OCI-LY7 (cell line): ENCODE measurements at regions of chr16 and their contacts with region 1.

Region 1: GRCh38 chr16:27235055-27235937 is 32.0 kb downstream of the KDM8 start:
- DNase-seq: peak; percentile 78
- H3K4me3 ChIP-seq: no peak overlapping the region
- H3K27ac ChIP-seq: no peak overlapping the region
- H3K4me1 ChIP-seq: peaks cover 67% of the 10 kb centered on the region
- CTCF ChIP-seq: peak; percentile 99

Region 2: DNA sequence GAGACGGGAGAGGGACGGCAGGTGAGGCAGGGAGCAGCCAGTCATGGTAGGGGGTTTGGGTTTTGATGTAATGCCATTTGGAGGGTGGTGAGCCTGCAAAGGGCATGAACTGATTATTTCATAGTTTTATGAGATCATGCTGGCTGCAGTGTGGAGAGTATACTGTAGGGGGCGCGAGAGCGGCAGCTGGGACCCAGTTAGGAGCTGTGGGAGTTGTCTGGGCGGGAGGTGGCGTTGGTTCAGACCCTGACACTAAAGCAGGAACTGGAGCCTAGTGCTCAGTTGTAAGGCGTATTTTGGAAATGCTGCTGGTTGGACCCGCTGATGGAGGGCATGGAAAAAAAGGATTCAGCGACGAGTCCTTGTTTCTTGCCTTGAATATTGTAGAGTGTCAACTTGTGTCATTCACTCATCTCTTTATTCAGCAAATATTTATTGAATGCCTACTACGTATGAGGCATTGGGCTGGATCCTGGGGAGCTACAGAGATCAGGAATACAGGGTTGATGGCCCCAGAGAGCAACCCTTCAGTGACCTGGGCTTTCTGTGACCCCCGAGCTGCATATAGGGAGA is 55.7 kb before region 1 on chr16:
- CTCF ChIA-PET with region 1: interaction called, 4 read pairs
- POLR2A ChIA-PET with region 1: interaction called, 3 read pairs
- intact Hi-C with region 1: loop called (anchors 1 kb)
- DNase-seq: peak; percentile 87
- H3K4me3 ChIP-seq: no peak overlapping the region
- H3K27ac ChIP-seq: no peak overlapping the region
- H3K4me1 ChIP-seq: peaks cover 33% of the 10 kb centered on the region
- CTCF ChIP-seq: peak; percentile 99

Region 3: DNA sequence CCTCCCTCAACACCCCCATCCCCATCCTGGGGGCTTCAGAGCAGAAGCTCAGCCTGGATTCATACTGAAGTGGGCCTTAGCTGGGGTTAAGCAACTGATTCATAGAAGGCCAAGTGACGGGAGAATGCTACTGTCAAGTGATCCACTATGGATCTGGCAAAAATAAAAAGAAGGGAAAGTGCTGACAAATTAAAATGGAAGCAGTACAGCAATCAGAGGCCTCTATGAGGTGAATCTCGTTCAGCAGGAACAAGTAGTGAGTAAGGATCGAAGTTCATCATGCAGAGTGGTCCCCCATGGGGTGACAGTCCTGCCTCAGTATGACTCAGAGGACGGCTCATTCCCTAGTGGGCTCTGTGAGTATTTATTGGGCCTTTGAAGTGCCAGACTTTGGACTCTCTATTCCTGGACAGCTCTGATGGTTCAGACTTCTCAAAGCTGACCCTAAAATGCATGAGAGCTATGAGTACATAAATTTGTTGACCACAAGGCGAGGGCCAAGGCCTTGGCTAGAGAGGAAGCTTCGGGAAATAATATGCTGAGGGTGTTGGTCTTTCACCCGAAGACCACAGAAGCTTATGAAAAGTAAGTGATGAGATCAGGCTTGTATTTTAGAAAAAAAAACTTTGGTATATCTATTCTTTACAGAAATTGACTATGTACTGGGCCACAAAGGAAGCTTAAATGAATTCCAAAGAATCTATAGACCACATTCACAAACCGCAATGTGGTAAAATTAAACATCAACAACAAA is 38.6 kb after region 1 on chr16:
- CTCF ChIA-PET with region 1: interaction called, 6 read pairs
- POLR2A ChIA-PET with region 1: interaction called, 5 read pairs
- intact Hi-C with region 1: loop called (anchors 1 kb)
- DNase-seq: no peak
- H3K4me3 ChIP-seq: peak overlapping the region; percentile 16
- H3K27ac ChIP-seq: peak overlapping the region; percentile 89
- H3K4me1 ChIP-seq: peaks cover 68% of the 10 kb centered on the region
- CTCF ChIP-seq: peak; percentile 38; the same call in 1 of the 2 replicates

Region 4: DNA sequence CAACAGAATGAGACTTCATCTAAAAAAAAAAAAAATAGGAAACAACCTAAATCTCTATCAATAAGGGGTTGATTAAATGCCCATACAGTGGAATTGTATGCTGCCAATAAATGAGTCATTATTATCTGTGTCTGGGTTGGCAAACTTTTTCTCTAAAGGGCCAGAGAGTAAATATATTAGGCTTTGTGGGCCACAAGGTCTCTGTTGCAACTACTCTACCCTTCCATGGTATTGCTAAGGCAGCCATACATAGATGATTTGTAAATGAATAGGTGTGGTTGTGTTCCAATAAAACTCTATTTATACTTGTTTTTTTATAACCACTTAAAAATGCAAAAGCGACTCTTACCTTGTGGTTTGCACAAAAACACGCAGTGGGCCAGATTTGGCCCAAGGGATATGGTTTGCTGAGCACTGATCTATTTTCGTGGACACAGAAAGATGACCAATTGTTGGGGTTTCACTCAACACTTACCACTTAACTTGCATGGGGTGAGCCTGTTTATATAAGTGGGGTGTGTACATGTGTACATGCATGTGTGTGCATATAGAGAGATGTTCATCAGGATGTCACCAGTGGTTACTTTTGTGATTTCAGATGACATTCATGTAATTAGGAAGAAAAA is 66.1 kb after region 1 on chr16:
- CTCF ChIA-PET with region 1: interaction called, 4 read pairs
- POLR2A ChIA-PET with region 1: interaction called, 9 read pairs
- intact Hi-C with region 1: loop called (anchors 1 kb)
- DNase-seq: no peak
- H3K4me3 ChIP-seq: peak overlapping the region; percentile 0
- H3K27ac ChIP-seq: peak overlapping the region; percentile 86
- H3K4me1 ChIP-seq: peaks cover 82% of the 10 kb centered on the region
- CTCF ChIP-seq: no peak

Region 5: GRCh38 chr16:27313422-27314160 is 78.3 kb after region 1 on chr16 and contains the start of gene IL4R:
- CTCF ChIA-PET with region 1: no interaction called
- POLR2A ChIA-PET with region 1: interaction called, 5 read pairs
- intact Hi-C with region 1: loop called (anchors 2 kb)
- DNase-seq: peak; percentile 72
- H3K4me3 ChIP-seq: peak within 1 kb of the TSS; percentile 93
- H3K27ac ChIP-seq: peak within 1 kb of the TSS; percentile 30
- H3K4me1 ChIP-seq: peaks cover 54% of the 10 kb centered on the region
- CTCF ChIP-seq: no peak
- total RNA-seq, gene IL4R: 33.0 and 82.8 TPM in 2 replicates

Region 6: GRCh38 chr16:27449434-27450195 is 214.3 kb after region 1 on chr16:
- CTCF ChIA-PET with region 1: no interaction called
- POLR2A ChIA-PET with region 1: no interaction called
- intact Hi-C with region 1: loop called (anchors 2 kb)
- DNase-seq: peak; percentile 23
- H3K4me3 ChIP-seq: no peak overlapping the region
- H3K27ac ChIP-seq: no peak overlapping the region
- H3K4me1 ChIP-seq: peaks cover 27% of the 10 kb centered on the region
- CTCF ChIP-seq: no peak

Region 7: DNA sequence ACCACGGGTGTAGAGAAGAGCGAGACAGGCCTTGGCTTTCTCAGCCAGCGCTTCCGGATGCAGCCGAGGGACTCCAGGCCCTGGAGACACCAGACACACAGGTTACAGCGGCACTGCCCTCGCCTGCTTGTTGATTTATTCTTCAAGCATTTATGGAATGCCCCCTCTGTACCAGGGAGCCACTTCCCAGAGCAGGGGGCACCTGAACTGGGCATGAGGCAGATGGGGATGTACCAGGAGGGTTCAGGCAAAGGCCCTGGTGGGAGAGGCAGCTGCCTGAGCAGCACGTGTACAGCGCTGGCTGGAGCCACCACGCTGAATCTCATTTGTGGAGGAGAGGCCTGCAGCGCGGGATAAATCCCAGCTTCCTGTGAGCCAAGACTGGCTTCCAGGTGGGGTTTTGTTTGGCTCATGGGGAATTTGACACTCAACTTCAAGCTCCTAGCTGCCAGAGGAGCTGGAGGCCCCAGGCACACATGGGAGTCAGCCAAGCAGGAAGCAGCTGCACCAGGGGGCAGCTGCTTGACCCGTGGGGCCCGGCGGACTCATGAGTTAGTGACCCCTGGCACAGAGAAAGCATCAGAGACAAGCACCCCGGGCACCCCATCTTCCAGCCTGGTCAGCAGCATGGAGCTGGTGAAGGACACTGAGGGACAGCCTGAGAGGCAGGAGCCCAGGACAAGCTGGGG is 226.3 kb after region 1 on chr16:
- CTCF ChIA-PET with region 1: no interaction called
- POLR2A ChIA-PET with region 1: no interaction called
- intact Hi-C with region 1: loop called (anchors 1 kb)
- DNase-seq: no peak
- H3K4me3 ChIP-seq: no peak overlapping the region
- H3K27ac ChIP-seq: no peak overlapping the region
- H3K4me1 ChIP-seq: no peaks in the 10 kb centered on the region
- CTCF ChIP-seq: no peak